Endothelial cell of umbilical vein (primary cell): ENCODE measurements at regions of chr2 and their contacts with region 1.

Region 1: DNA sequence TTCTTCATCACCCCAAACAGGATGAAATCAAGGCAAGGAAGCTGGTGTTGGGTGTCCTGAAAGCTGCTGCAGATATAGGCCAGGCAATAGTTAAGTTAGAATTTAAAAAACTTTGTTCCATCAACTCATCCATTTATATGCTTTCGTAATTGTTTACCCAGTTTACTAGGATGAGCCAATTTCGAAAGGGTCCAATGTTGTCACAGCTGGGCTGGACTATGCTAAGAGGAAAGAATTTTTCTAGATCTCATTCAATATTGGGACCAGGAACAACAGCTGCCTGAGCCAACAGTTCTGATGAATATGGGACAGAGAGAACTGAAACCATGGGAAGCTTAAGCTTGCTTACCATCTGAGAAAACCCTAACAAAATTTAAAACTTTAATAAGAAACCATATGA is 21.6 kb upstream of the SP3 start:
- DNase-seq: no peak
- H3K4me3 ChIP-seq: no peak overlapping the region
- H3K27ac ChIP-seq: no peak overlapping the region
- H3K4me1 ChIP-seq: no peaks in the 10 kb centered on the region
- H3K27me3 ChIP-seq: peaks cover 0 to 6% of the 10 kb centered on the region in 2 experiments
- CTCF ChIP-seq: no peak
- POLR2A ChIP-seq: no peak

Region 2: GRCh38 chr2:173997269-173997668 is 10.5 kb after region 1 on chr2:
- CTCF ChIA-PET with region 1: interaction called, 12 read pairs
- POLR2A ChIA-PET with region 1: no interaction called
- dilution Hi-C with region 1: no loop called
- intact Hi-C with region 1: no loop called
- DNase-seq: no peak
- H3K4me3 ChIP-seq: no peak overlapping the region
- H3K27ac ChIP-seq: no peak overlapping the region
- H3K4me1 ChIP-seq: no peaks in the 10 kb centered on the region
- H3K27me3 ChIP-seq: peaks cover 20 to 39% of the 10 kb centered on the region in 2 experiments
- CTCF ChIP-seq: no peak
- POLR2A ChIP-seq: no peak

Region 3: DNA sequence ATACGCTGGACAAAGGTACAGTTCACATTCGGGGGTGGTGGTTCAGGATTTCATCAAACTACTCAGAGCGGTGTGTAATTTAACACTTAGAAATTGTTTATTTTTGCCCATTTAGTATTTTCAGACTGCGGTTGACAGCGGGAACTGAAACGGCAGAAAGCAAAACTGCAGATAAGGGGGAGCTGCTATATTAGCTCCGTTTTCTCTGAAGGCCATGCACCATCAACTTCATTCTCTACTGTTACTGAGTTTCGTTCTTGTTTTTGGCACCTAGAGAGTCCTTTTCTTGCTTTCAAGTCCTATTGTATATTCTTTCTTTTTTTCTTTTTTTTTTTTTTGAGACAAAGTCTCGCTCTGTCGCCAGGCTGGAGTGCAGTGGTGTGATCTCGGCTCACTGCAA is 99.9 kb after region 1 on chr2:
- CTCF ChIA-PET with region 1: no interaction called
- POLR2A ChIA-PET with region 1: no interaction called
- dilution Hi-C with region 1: no loop called
- intact Hi-C with region 1: no loop called
- DNase-seq: no peak
- H3K4me3 ChIP-seq: no peak overlapping the region
- H3K27ac ChIP-seq: no peak overlapping the region
- H3K4me1 ChIP-seq: no peaks in the 10 kb centered on the region
- H3K27me3 ChIP-seq: no peaks in the 10 kb centered on the region
- CTCF ChIP-seq: no peak
- POLR2A ChIP-seq: no peak